Calu3 (cell line): ENCODE measurements at regions of chr6 and their contacts with region 1.

Region 1: DNA sequence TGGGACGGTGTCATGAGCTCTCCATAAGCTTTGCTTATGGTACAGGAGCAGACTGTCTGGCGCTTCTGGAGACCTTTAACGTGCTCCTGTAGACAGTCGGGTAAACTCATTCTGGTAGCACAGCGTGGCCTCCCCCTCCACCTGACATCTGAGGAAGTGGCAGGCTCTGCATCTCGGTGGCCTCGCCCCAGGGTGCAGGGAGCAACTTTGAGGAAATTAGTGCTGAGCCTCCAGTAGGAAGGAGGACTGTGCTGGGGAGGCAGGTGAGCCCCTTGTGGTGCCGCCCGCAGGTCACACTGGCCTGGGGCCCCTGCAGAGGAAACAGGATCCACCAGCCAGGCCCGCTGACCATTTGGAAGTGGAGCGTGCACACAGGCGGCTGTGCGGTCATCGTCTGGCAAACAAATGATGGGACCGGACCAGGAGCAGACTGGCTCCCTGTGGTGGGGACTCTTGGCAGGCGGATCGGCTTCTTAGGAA is 57.9 kb downstream of the SYNJ2 start:
- DNase-seq: no peak
- H3K4me3 Mint-ChIP-seq: no peak overlapping the region
- H3K27ac Mint-ChIP-seq: peak overlapping the region; percentile 56
- H3K4me1 Mint-ChIP-seq: peaks cover 76% of the 10 kb centered on the region
- H3K27me3 Mint-ChIP-seq: no peaks in the 10 kb centered on the region
- CTCF ChIP-seq: no peak

Region 2: GRCh38 chr6:158014505-158015187 is 25.0 kb before region 1 on chr6:
- CTCF ChIA-PET with region 1: no interaction called
- intact Hi-C with region 1: loop called (anchors 1 kb)
- DNase-seq: no peak
- H3K4me3 Mint-ChIP-seq: no peak overlapping the region
- H3K27ac Mint-ChIP-seq: no peak overlapping the region
- H3K4me1 Mint-ChIP-seq: peaks cover 45% of the 10 kb centered on the region
- H3K27me3 Mint-ChIP-seq: no peaks in the 10 kb centered on the region
- CTCF ChIP-seq: no peak